ENCODE measurements at regions of chr3 and their contacts with region 1.

Region 1: GRCh38 chr3:122458992-122459391 is 43.1 kb upstream of the WDR5B start:
- DNase-seq: no peak
- ATAC-seq: peak in 1 of 4 donors; percentile 45
- H3K4me3 ChIP-seq: no peak overlapping the region
- H3K27ac ChIP-seq: no peak overlapping the region
- H3K4me1 ChIP-seq: no peaks in the 10 kb centered on the region
- H3K27me3 ChIP-seq: no peaks in the 10 kb centered on the region
- CTCF ChIP-seq: peak; percentile 40

Region 2: DNA sequence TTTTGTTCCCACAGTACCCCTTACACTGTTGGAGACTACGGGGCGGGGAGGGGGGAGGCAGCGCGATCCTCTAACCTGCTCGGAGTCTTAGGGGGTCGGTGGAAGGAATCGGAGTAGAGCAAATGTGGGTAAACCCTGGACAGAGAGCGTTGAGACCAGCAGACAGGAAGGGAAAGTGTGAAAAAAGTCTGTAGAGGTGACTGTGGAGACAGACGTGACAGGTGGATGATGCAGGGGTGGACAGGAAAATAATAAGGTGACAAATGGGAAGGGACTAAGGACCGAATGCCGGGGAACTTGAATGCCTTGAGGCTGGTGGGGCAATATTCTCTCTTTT is 623.6 kb before region 1 on chr3:
- intact Hi-C with region 1: no loop called
- DNase-seq: no peak
- ATAC-seq: peak; percentile 22 to 46 (median 32)
- H3K4me3 ChIP-seq: peak overlapping the region; percentile 89
- H3K27ac ChIP-seq: peak overlapping the region; percentile 83
- H3K4me1 ChIP-seq: peaks cover 18% of the 10 kb centered on the region
- H3K27me3 ChIP-seq: no peaks in the 10 kb centered on the region
- CTCF ChIP-seq: no peak

Region 3: GRCh38 chr3:122497425-122497824 is 38.4 kb after region 1 on chr3:
- intact Hi-C with region 1: loop called in 1 of 2 experiments (anchors 5 kb)
- DNase-seq: no peak
- ATAC-seq: peak; percentile 88 to 92 (median 90)
- H3K4me3 ChIP-seq: no peak overlapping the region
- H3K27ac ChIP-seq: peak overlapping the region; percentile 71
- H3K4me1 ChIP-seq: peaks cover 59% of the 10 kb centered on the region
- H3K27me3 ChIP-seq: no peaks in the 10 kb centered on the region
- CTCF ChIP-seq: no peak